Caco-2 (cell line): ENCODE measurements at regions of chr7 and their contacts with region 1.

Region 1: GRCh38 chr7:78924581-78924980 is 528.9 kb downstream of the MAGI2 start:
- DNase-seq: peak in 1 of 2 experiments; percentile 8
- H3K4me3 ChIP-seq: no peak overlapping the region
- H3K4me3 Mint-ChIP-seq: no peak overlapping the region
- H3K27ac Mint-ChIP-seq: no peak overlapping the region
- H3K4me1 ChIP-seq: no peaks in the 10 kb centered on the region
- H3K4me1 Mint-ChIP-seq: no peaks in the 10 kb centered on the region
- H3K27me3 ChIP-seq: no peaks in the 10 kb centered on the region
- H3K27me3 Mint-ChIP-seq: peaks cover 5% of the 10 kb centered on the region
- CTCF ChIP-seq: peak; percentile 21 to 32

Region 2: DNA sequence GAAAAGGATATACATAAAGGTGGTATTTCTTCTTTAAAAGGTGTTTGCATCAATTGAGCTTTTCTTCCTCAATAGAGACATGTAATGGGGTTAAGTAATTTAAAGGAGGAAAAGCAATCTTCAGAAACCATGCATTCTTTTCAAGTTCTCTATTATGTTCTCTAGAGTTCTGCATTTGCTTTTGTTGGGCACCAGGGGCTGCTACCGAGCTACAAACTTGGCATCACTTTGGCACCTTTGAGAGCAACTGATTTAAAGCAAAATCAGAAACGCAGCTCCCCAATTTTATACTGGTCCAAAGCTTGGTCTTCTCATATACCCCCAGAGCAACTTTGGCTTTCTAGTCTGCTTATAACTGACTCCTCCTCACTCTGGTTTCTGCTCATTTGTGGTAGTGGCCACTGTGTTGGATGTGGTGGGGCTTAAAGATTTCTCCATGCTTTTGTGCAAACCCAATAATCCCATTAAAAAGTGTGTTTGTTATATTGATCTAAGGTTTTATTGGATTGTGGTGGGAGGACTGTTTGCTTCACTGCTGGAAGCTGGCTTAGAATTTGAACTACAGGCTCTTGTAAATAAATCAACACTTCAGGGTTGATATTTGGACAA is 413.9 kb before region 1 on chr7:
- CTCF ChIA-PET with region 1: no interaction called
- POLR2A ChIA-PET with region 1: no interaction called
- intact Hi-C with region 1: loop called (anchors 1 kb)
- DNase-seq: peak in 1 of 2 experiments; percentile 34
- H3K4me3 ChIP-seq: no peak overlapping the region
- H3K4me3 Mint-ChIP-seq: no peak overlapping the region
- H3K27ac Mint-ChIP-seq: no peak overlapping the region
- H3K4me1 ChIP-seq: no peaks in the 10 kb centered on the region
- H3K4me1 Mint-ChIP-seq: no peaks in the 10 kb centered on the region
- H3K27me3 ChIP-seq: no peaks in the 10 kb centered on the region
- H3K27me3 Mint-ChIP-seq: peaks cover 11% of the 10 kb centered on the region
- CTCF ChIP-seq: peak; percentile 58 to 76

Region 3: GRCh38 chr7:78587443-78588044 is 337.0 kb before region 1 on chr7:
- CTCF ChIA-PET with region 1: no interaction called
- POLR2A ChIA-PET with region 1: no interaction called
- intact Hi-C with region 1: loop called (anchors 1 kb)
- DNase-seq: peak in 1 of 2 experiments; percentile 42
- H3K4me3 ChIP-seq: no peak overlapping the region
- H3K4me3 Mint-ChIP-seq: no peak overlapping the region
- H3K27ac Mint-ChIP-seq: no peak overlapping the region
- H3K4me1 ChIP-seq: no peaks in the 10 kb centered on the region
- H3K4me1 Mint-ChIP-seq: no peaks in the 10 kb centered on the region
- H3K27me3 ChIP-seq: no peaks in the 10 kb centered on the region; the same call in 1 of the 2 replicates
- H3K27me3 Mint-ChIP-seq: peaks cover 3% of the 10 kb centered on the region
- CTCF ChIP-seq: peak; percentile 40 to 55

Region 4: GRCh38 chr7:78879206-78879605 is 45.4 kb before region 1 on chr7:
- CTCF ChIA-PET with region 1: no interaction called
- POLR2A ChIA-PET with region 1: no interaction called
- intact Hi-C with region 1: no loop called
- DNase-seq: no peak
- H3K4me3 ChIP-seq: no peak overlapping the region
- H3K4me3 Mint-ChIP-seq: no peak overlapping the region
- H3K27ac Mint-ChIP-seq: no peak overlapping the region
- H3K4me1 ChIP-seq: no peaks in the 10 kb centered on the region
- H3K4me1 Mint-ChIP-seq: no peaks in the 10 kb centered on the region
- H3K27me3 ChIP-seq: no peaks in the 10 kb centered on the region
- H3K27me3 Mint-ChIP-seq: no peaks in the 10 kb centered on the region
- CTCF ChIP-seq: no peak

Region 5: DNA sequence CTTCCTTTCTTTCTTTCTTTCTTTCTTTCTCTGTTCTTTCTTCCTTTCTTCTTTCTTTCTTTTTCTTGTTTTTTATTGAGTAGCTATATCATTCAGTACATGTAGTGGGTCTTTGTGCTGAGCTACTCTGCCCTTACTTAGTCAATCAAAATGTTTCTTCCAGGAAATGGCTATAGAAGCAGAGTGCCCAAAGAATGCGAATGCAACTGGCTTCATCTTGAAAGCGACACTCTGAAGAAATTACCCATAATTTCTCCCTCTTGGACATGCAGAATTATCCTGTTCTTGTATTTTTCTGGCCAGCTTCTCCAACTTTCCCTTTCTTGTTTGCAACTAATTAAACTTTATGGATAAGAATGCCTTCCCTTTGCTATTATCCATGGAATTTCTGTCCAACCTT is 87.3 kb after region 1 on chr7:
- CTCF ChIA-PET with region 1: no interaction called
- POLR2A ChIA-PET with region 1: no interaction called
- intact Hi-C with region 1: no loop called
- DNase-seq: no peak
- H3K4me3 ChIP-seq: no peak overlapping the region
- H3K4me3 Mint-ChIP-seq: no peak overlapping the region
- H3K27ac Mint-ChIP-seq: no peak overlapping the region
- H3K4me1 ChIP-seq: no peaks in the 10 kb centered on the region
- H3K4me1 Mint-ChIP-seq: no peaks in the 10 kb centered on the region
- H3K27me3 ChIP-seq: no peaks in the 10 kb centered on the region
- H3K27me3 Mint-ChIP-seq: peaks cover 3% of the 10 kb centered on the region
- CTCF ChIP-seq: no peak